Esophagus muscularis mucosa (tissue), 4 donors: ENCODE measurements at regions of chr11 and their contacts with region 1.

Region 1: DNA sequence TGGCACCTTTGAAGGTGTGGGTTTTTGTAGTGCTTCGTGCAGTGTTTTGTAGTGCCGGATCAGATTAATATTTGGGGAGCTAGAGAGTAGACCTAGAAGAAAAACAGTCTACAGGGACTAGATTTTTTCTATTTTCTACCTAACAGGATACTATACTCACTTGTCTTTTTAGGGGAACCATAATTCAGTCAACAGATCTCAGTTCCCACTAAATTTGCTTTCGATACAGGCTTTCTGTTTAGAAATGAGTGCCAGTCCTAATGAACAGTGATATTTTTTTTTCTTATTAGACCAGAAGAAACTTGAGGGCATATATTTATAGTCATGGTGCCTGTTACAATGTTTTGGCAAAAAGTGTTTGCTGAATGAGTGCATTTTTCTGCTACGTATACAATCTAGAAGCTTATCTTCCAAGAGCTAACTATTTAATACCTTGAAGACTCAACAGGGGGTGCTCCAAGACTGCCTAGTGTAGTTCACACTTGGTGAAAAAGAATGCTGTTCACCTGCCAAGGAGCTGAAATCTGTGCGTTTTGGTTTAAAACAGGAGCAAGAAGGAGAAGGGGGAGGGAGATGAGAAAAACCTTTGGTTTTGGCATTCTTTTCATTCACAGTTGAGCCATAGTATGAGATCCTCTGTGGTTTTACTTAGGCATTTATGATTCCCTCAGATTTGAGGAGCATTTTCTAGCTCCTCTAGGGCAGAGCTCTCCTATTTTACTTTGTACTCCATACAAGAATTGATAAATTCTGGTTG is 44.9 kb upstream of the VSTM5 start:
- DNase-seq: no peak
- H3K4me3 ChIP-seq: no peak overlapping the region
- H3K27ac ChIP-seq: no peak overlapping the region
- H3K4me1 ChIP-seq: peaks cover 0 to 6% (median 3%) of the 10 kb centered on the region in 4 donors
- H3K27me3 ChIP-seq: peaks cover 0 to 32% (median 2%) of the 10 kb centered on the region in 4 donors
- CTCF ChIP-seq: peak; percentile 51 to 72 (median 53)
- EP300 ChIP-seq: no peak
- POLR2A ChIP-seq: no peak

Region 2: DNA sequence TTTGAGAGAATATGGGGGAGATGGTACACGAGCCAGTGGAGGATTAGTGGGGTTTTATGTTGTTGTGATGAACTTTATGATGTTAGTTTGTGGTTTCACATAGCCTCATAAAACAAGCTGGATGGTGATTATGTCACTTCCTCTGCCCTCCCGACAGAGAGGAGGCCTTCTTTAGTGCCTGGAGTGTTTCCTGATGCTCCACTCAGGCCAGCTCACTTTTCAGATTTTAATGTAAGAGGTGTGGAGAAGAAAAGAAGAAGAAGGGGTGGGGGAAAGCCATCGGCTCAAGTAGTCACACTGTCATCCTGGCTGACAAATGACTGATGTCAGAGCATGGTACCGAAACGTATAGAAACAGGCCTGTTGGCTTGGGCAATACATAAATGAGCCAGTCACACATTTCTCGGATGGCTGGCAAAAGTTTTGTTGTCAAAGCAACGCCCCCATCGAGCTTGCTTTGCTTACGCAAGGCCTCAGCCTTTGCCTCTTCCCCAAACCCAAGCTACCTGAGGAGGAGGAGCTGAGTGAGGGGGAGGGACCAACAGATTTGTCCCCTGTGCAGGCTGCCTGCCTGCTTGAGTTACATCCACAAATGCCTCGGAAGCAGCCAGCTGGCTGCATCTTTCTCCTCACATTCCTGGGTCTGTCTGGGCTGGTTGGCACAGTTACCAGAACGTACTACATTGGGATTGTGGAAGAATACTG is 125.6 kb after region 1 on chr11 and contains the start of gene HEPHL1:
- intact Hi-C with region 1: no loop called
- DNase-seq: no peak
- H3K4me3 ChIP-seq: no peak within 1 kb of the TSS
- H3K27ac ChIP-seq: no peak within 1 kb of the TSS
- H3K4me1 ChIP-seq: no peaks in the 10 kb centered on the region
- H3K27me3 ChIP-seq: no peaks in the 10 kb centered on the region
- CTCF ChIP-seq: no peak
- EP300 ChIP-seq: no peak
- POLR2A ChIP-seq: no peak
- total RNA-seq, gene HEPHL1: 0.42 TPM in 1 of 4 donors, not detected in the others

Region 3: DNA sequence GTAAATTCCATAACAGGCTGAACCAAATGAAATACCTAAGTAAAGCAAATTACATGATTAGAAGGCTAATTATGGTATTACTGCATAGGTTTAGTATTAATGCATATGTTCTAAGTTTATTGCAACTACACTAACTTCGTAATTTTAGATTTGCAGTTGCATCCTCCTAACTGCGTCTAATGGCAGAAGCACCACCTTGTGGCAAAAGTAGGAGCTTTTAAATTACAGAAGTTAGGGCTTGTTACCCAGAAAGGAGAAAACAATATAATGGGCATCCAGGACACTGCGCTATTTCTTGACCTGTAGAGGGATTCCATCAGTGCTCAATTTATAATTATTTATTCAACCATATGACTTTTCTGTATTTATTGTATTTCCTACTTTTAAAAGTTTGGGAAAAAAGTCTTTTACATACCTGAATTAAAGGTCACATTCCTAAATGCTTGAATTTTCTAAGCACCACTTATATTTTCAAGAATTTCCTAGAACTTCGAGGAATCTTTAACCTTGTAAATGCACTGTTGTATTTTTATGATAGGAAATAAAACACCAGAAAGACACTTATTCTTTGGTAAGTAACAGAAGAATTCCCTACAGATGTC is 522.2 kb after region 1 on chr11:
- intact Hi-C with region 1: loop called (anchors 5 kb)
- DNase-seq: no peak
- H3K4me3 ChIP-seq: no peak overlapping the region
- H3K27ac ChIP-seq: no peak overlapping the region
- H3K4me1 ChIP-seq: no peaks in the 10 kb centered on the region
- H3K27me3 ChIP-seq: no peaks in the 10 kb centered on the region
- CTCF ChIP-seq: peak; percentile 40 to 54 (median 44)
- EP300 ChIP-seq: no peak
- POLR2A ChIP-seq: no peak

Region 4: GRCh38 chr11:94504689-94505293 is 609.5 kb after region 1 on chr11:
- intact Hi-C with region 1: loop called (anchors 5 kb)
- DNase-seq: no peak
- H3K4me3 ChIP-seq: no peak overlapping the region
- H3K27ac ChIP-seq: no peak overlapping the region
- H3K4me1 ChIP-seq: no peaks in the 10 kb centered on the region
- H3K27me3 ChIP-seq: no peaks in the 10 kb centered on the region
- CTCF ChIP-seq: peak; percentile 54 to 77 (median 60)
- EP300 ChIP-seq: no peak
- POLR2A ChIP-seq: no peak